Endothelial cell of umbilical vein (primary cell): ENCODE measurements at regions of chrX and their contacts with region 1.

Region 1: GRCh38 chrX:45715748-45716147 is 515.1 kb upstream of the DIPK2B start:
- DNase-seq: peak; percentile 53
- H3K4me3 ChIP-seq: no peak overlapping the region
- H3K27ac ChIP-seq: peak overlapping the region; percentile 98
- H3K4me1 ChIP-seq: peaks cover 77% of the 10 kb centered on the region
- H3K27me3 ChIP-seq: no peaks in the 10 kb centered on the region
- CTCF ChIP-seq: no peak
- POLR2A ChIP-seq: no peak

Region 2: DNA sequence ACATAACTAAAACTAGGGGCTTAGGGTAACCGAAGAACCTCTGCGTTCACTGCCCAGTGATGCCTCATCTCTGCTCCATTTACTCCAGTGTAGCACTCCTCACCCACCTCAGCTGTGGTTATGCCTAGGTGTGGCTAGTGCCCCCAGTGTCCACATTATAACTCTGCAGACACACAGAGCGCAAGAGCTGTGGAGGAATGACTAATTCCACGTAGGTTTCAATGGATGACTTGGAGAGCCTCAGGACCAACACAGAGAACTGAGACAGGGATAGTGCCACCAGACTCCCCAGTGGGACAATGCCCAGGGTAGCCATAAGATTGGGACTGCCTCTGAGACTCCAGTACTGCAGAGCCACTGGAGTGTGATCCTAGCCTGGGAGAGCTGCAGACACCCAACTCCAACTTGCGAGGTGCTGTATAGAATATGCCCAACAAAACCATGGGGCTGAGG is 27.4 kb after region 1 on chrX:
- CTCF ChIA-PET with region 1: interaction called, 11 read pairs
- POLR2A ChIA-PET with region 1: interaction called, 5 read pairs
- dilution Hi-C with region 1: no loop called
- intact Hi-C with region 1: loop called (anchors 2 kb)
- DNase-seq: peak; percentile 61
- H3K4me3 ChIP-seq: no peak overlapping the region
- H3K27ac ChIP-seq: no peak overlapping the region
- H3K4me1 ChIP-seq: no peaks in the 10 kb centered on the region
- H3K27me3 ChIP-seq: no peaks in the 10 kb centered on the region
- CTCF ChIP-seq: peak; percentile 32 to 35
- POLR2A ChIP-seq: peak; percentile 73

Region 3: GRCh38 chrX:46165411-46165810 is 449.7 kb after region 1 on chrX:
- CTCF ChIA-PET with region 1: no interaction called
- POLR2A ChIA-PET with region 1: no interaction called
- dilution Hi-C with region 1: no loop called
- intact Hi-C with region 1: no loop called
- DNase-seq: no peak
- H3K4me3 ChIP-seq: no peak overlapping the region
- H3K27ac ChIP-seq: no peak overlapping the region
- H3K4me1 ChIP-seq: no peaks in the 10 kb centered on the region
- H3K27me3 ChIP-seq: no peaks in the 10 kb centered on the region
- CTCF ChIP-seq: no peak
- POLR2A ChIP-seq: no peak